ENCODE measurements at regions of chr15 and their contacts with region 1.

Region 1: DNA sequence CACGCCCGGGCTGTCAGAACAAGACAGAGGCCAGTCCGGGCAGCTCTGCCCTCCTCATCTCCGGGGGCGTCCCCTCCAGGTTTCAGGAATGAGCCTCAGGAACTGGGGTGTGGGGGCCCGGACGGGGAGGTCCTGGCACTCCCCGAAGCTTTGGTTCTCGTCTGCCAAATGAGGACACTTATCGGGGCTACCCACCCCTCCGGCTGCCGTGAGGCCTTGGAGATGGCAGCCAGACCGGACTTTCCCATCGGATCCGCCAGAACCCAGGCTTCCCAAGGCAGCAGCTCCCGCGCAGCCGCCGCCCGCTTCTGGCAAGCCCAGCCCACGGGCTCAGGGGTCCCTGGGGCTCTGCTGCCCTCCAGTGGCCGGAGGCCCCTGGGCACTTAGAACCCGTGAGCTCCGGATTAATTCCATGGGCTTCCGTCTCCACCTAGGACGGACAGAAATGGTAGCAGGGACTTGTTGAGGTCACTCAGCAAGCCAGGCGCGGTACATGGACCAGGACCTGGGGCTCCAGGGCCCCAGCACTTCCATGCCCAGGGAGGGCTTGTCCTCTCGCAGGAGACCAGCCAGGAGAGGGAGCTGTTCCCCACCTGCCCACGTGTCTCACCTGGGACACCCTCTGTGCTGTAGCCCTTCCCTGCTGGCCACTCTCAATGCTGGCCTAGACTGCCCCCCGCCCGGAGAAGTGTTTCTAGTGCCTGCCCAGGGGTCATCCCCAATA is 89.4 kb downstream of the LINGO1 start:
- DNase-seq: peak; percentile 90 to 91
- ATAC-seq: peak; percentile 88 to 93 (median 92)
- H3K4me3 ChIP-seq: peak overlapping the region in 9 of 10 donors; percentile 18 to 56 (median 49)
- H3K27ac ChIP-seq: peak overlapping the region in 9 of 10 donors; percentile 19 to 87 (median 77)
- H3K4me1 ChIP-seq: peaks cover 19 to 63% (median 47%) of the 10 kb centered on the region in 9 donors
- H3K27me3 ChIP-seq: no peaks in the 10 kb centered on the region
- CTCF ChIP-seq: peak; percentile 97 to 100 (median 98)

Region 2: DNA sequence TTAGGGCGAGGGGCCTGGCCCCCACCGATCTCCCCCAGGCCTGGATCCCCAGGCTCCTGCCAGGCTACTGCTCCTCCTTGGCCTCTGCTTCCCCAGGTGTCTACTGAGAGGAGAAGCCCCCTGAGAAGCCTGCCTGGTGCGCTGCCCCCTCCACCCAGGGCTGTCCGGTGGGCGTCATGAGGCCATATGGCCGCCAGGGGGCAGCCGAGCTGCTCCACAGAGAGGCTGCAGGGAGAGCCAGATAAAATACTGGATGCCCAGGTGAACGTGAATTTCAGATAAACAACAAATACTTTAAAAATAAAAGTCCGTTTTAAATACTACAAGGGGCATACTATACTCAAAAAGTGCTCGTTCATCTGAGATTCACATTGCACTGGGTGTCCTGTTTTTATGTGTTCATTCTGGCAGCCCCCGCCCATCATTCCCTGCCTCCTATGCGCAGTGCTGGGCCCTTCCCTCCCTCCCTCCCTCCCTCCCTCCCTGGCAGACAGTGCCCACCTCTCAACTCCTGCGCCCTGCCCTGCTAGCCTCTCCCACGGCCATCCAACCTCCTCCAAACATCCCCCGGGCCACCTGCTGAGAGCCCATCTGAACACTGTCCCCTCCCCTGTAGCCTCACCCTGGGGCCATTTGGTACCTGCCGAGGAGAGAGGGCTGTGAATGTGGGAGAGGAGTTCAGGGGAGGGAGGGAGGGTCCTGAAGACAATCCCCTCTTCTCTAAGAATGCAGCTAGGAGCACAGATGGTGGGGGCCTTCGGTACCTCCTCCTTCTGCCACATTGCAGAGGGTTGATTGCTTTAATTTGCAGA is 518.8 kb before region 1 on chr15:
- intact Hi-C with region 1: loop called in 9 of 10 experiments (anchors 1 to 10 kb)
- DNase-seq: peak; percentile 63 to 79
- ATAC-seq: peak; percentile 38 to 77 (median 54)
- H3K4me3 ChIP-seq: no peak overlapping the region
- H3K27ac ChIP-seq: no peak overlapping the region
- H3K4me1 ChIP-seq: peaks cover 0 to 38% (median 9%) of the 10 kb centered on the region in 9 donors
- H3K27me3 ChIP-seq: peaks cover 0 to 10% (median 0%) of the 10 kb centered on the region in 7 donors
- CTCF ChIP-seq: peak; percentile 93 to 98 (median 97)

Region 3: DNA sequence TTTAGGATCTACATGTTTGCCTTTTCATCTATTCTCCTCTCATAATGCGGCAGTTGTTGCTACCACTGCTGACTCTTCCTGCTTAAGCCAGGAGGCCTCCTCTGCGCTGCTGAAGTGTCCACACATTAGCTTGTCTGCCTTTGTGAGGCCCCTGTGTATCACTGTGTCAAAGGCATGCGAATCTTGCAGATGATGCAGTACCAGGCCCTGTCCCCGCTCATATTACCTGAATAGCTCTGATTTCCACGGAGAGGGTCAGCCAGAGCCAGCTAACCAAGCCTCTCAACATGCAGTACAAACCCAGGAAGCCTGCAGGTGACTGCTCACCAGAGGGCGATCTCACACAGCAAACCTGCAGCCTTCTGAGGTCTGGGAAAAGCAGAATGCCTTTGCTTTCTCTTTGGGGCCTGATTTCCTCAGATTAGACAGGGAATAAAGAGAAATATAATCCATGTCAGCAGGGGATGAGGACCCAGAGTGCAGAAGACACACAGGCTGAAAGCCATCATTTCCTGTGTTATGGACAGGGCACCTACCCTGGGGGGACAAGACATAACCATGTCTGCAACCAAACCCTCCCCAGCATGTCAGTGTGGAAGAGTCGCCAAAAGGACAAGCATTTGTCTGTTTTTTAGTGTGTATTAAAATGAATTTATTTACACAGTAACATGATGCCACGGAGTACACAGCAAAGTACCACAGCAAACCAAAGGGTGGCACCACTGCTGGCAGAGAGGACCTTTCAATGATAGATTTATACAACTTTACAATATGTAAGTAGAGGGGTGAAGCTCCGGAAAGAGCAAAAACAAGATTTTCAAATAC is 435.6 kb before region 1 on chr15:
- intact Hi-C with region 1: loop called in 3 of 10 experiments (anchors 2 to 5 kb)
- DNase-seq: peak; percentile 51 to 65
- ATAC-seq: peak; percentile 46 to 82 (median 76)
- H3K4me3 ChIP-seq: no peak overlapping the region
- H3K27ac ChIP-seq: peak overlapping the region in 8 of 10 donors; percentile 4 to 73 (median 61)
- H3K4me1 ChIP-seq: peaks cover 20 to 74% (median 36%) of the 10 kb centered on the region in 9 donors
- H3K27me3 ChIP-seq: no peaks in the 10 kb centered on the region
- CTCF ChIP-seq: peak; percentile 39 to 77 (median 62)

Region 4: DNA sequence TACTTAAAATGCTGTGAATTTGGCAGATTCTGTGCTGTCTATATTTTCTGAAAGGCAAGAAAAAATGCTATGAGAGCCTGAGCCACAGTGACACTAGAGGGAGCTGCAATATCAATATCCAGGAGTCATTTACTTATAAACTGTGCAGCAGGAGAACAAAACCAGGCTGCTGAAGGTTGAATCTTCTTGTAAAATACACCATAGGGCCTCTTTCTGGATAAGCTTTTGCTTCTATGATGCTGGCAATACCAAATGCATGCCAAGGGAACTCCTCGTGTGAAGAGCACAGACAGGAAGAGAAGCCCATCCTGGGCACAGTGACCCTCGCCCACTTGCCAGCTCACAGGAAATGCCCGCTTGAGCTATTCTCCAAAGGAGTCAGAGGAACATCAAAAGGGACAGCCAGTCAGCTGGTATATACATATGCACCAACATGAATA is 424.4 kb before region 1 on chr15:
- intact Hi-C with region 1: loop called (anchors 1 to 5 kb)
- DNase-seq: peak in 1 of 2 donors; percentile 60
- ATAC-seq: peak in 6 of 8 donors; percentile 71 to 82 (median 79)
- H3K4me3 ChIP-seq: no peak overlapping the region
- H3K27ac ChIP-seq: peak overlapping the region in 2 of 10 donors; percentile 3 to 38
- H3K4me1 ChIP-seq: peaks cover 0 to 40% (median 16%) of the 10 kb centered on the region in 9 donors
- H3K27me3 ChIP-seq: no peaks in the 10 kb centered on the region
- CTCF ChIP-seq: peak; percentile 59 to 89 (median 75)

Region 5: DNA sequence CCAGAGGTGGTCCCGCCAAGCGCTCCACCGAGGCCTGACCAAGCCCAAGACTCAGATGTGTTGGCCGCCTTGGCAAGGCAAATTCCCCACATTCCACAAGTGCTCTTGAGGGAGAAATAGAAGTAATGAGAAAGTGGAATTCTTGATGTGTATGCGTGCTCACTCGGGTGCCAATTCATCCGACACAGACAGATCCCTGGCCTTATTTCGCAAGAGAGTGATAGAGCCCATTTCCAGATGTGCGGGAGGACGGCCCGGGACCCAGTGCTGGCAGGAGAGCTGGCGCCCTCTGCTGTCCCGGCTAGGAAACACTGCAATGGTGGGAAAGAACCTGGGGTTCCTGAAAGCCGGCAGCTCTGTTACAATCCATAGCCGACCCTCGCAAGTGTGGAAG is 46.6 kb before region 1 on chr15:
- intact Hi-C with region 1: loop called in 5 of 10 experiments (anchors 2 to 5 kb)
- DNase-seq: peak; percentile 89
- ATAC-seq: peak; percentile 79 to 92 (median 85)
- H3K4me3 ChIP-seq: peak overlapping the region in 7 of 10 donors; percentile 14 to 34 (median 31)
- H3K27ac ChIP-seq: peak overlapping the region; percentile 80 to 96 (median 92)
- H3K4me1 ChIP-seq: peaks cover 34 to 97% (median 71%) of the 10 kb centered on the region in 9 donors
- H3K27me3 ChIP-seq: no peaks in the 10 kb centered on the region
- CTCF ChIP-seq: peak; percentile 94 to 98 (median 97)

Region 6: GRCh38 chr15:77599899-77600298 is 56.6 kb after region 1 on chr15:
- intact Hi-C with region 1: no loop called
- DNase-seq: peak; percentile 60 to 81
- ATAC-seq: peak in 7 of 8 donors; percentile 65 to 87 (median 76)
- H3K4me3 ChIP-seq: no peak overlapping the region
- H3K27ac ChIP-seq: peak overlapping the region in 5 of 10 donors; percentile 23 to 78 (median 43)
- H3K4me1 ChIP-seq: peaks cover 0 to 8% (median 0%) of the 10 kb centered on the region in 9 donors
- H3K27me3 ChIP-seq: peaks cover 0 to 1% (median 0%) of the 10 kb centered on the region in 7 donors
- CTCF ChIP-seq: no peak

Measured in heart right ventricle (tissue), 16 donors.